HepG2 (cell line): ENCODE measurements at regions of chr17 and their contacts with region 1.

Region 1: DNA sequence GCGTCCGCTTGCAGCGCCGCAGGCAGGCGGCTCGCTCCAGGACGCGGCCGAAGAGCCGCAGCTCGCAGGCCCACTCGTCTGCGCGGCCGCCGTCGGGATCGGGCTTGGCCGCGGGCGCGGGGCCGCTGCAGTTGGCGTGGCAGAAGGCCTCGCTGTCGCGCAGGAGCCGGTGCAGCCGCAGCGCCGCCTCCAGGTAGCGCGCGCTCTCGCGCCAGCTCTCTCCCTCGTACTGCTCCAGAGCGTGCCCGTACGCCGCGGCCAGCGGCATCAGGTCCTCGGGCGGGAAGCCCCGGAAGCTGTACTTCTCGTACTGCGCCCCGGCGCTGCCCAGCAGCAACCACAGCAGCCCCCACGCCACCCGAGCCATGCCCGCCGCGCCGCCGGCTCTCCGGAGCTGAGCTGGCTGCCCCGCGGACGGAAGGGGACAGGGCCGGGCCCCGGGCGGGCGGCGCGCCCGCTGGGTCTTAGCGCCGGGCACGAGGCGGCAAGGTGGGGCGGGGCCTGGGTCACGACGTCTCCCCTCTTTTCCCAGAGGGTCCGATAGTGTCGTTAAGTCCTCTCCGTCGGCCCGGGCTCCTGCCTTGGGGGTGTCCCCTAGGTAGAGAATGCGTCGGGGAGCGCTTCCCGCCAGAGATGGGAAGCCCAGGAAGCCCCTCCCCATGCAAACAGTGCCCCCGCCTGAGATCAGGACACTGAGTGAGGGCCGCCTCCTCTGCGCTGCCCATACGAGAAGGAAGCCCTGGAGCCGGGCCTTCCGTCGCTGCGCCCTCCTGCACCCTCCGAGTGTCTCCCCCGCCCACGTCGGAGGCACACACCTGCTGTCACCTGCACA is at the start of gene P3H4:
- DNase-seq: peak; percentile 60
- ATAC-seq: peak; percentile 80
- H3K4me3 ChIP-seq: peak within 1 kb of the TSS; percentile 83 to 88 (median 87)
- H3K27ac ChIP-seq: peak within 1 kb of the TSS; percentile 82
- H3K4me1 ChIP-seq: peaks cover 60% of the 10 kb centered on the region
- H3K27me3 ChIP-seq: no peaks in the 10 kb centered on the region; a peak in 1 of 5 replicates
- CTCF ChIP-seq: peak; percentile 87
- EP300 ChIP-seq: peak; percentile 15 to 41; a peak in 1 of 4 replicates
- POLR2A ChIP-seq: peak; percentile 43 to 48; a peak in 2 of 4 replicates
- RAD21 ChIP-seq: peak; percentile 93
- total RNA-seq, gene P3H4: 13.5 and 37.1 TPM in 2 replicates

Region 2: GRCh38 chr17:41724476-41725050 is 87.2 kb before region 1 on chr17:
- CTCF ChIA-PET with region 1: no interaction called
- POLR2A ChIA-PET with region 1: no interaction called
- in situ Hi-C with region 1: no loop called
- intact Hi-C with region 1: no loop called
- DNase-seq: no peak
- ATAC-seq: no peak
- H3K4me3 ChIP-seq: no peak overlapping the region
- H3K27ac ChIP-seq: no peak overlapping the region
- H3K4me1 ChIP-seq: no peaks in the 10 kb centered on the region
- H3K27me3 ChIP-seq: peaks cover 10 to 61% of the 10 kb centered on the region in 2 experiments; a peak in 4 of 5 replicates
- CTCF ChIP-seq: no peak
- EP300 ChIP-seq: no peak
- POLR2A ChIP-seq: no peak
- RAD21 ChIP-seq: no peak

Region 3: GRCh38 chr17:41738077-41738735 is 73.6 kb before region 1 on chr17:
- CTCF ChIA-PET with region 1: interaction called, 14 read pairs
- POLR2A ChIA-PET with region 1: interaction called, 4 read pairs
- in situ Hi-C with region 1: no loop called
- intact Hi-C with region 1: no loop called
- DNase-seq: peak; percentile 78
- ATAC-seq: peak; percentile 79
- H3K4me3 ChIP-seq: peak overlapping the region in 1 of 3 experiments; percentile 23; a peak in 2 of 6 replicates
- H3K27ac ChIP-seq: no peak overlapping the region
- H3K4me1 ChIP-seq: peaks cover 38% of the 10 kb centered on the region
- H3K27me3 ChIP-seq: peaks cover 18 to 59% of the 10 kb centered on the region in 2 experiments
- CTCF ChIP-seq: peak; percentile 99
- EP300 ChIP-seq: no peak
- POLR2A ChIP-seq: no peak
- RAD21 ChIP-seq: peak; percentile 100

Region 4: GRCh38 chr17:41786227-41787020 is 25.3 kb before region 1 on chr17 and contains the start of gene JUP:
- CTCF ChIA-PET with region 1: interaction called, 3 read pairs
- POLR2A ChIA-PET with region 1: interaction called, 11 read pairs
- in situ Hi-C with region 1: no loop called
- intact Hi-C with region 1: no loop called
- DNase-seq: peak; percentile 99
- ATAC-seq: peak; percentile 97
- H3K4me3 ChIP-seq: peak within 1 kb of the TSS; percentile 60 to 90 (median 71)
- H3K27ac ChIP-seq: peak within 1 kb of the TSS; percentile 62
- H3K4me1 ChIP-seq: peaks cover 34% of the 10 kb centered on the region
- H3K27me3 ChIP-seq: no peaks in the 10 kb centered on the region; a peak in 1 of 5 replicates
- CTCF ChIP-seq: peak; percentile 83
- EP300 ChIP-seq: no peak
- POLR2A ChIP-seq: peak; percentile 89 to 97
- RAD21 ChIP-seq: peak; percentile 93
- total RNA-seq, gene JUP: 20.6 and 20.9 TPM in 2 replicates

Region 5: GRCh38 chr17:41801374-41802271 is 10.1 kb before region 1 on chr17:
- CTCF ChIA-PET with region 1: no interaction called
- POLR2A ChIA-PET with region 1: interaction called, 18 read pairs
- in situ Hi-C with region 1: no loop called
- intact Hi-C with region 1: no loop called
- DNase-seq: peak; percentile 68
- ATAC-seq: peak; percentile 73
- H3K4me3 ChIP-seq: peak overlapping the region in 2 of 3 experiments; percentile 5 to 63; a peak in 3 of 6 replicates
- H3K27ac ChIP-seq: no peak overlapping the region
- H3K4me1 ChIP-seq: peaks cover 30% of the 10 kb centered on the region
- H3K27me3 ChIP-seq: no peaks in the 10 kb centered on the region
- CTCF ChIP-seq: peak; percentile 98
- EP300 ChIP-seq: no peak
- POLR2A ChIP-seq: no peak; a peak in 1 of 4 replicates
- RAD21 ChIP-seq: peak; percentile 96

Region 6: DNA sequence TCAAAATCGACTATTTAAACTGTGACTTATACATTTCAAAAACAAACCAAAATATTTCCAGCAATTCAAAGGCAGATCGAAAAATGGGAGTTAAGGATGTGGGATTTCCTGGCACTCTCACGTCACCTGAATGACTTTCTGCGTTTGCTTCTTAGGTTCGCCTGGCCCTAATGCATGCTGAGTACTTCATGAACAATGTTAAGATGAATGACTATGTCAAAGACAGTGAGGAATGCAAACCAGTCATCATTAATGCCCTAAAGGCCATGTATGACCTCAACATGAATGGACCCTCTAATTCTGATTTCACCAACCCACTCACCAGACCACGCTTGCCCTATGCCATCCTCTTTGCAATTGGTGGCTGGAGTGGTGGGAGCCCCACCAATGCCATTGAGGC is 33.2 kb after region 1 on chr17:
- CTCF ChIA-PET with region 1: no interaction called
- POLR2A ChIA-PET with region 1: no interaction called
- in situ Hi-C with region 1: no loop called
- intact Hi-C with region 1: no loop called
- DNase-seq: no peak
- ATAC-seq: no peak
- H3K4me3 ChIP-seq: no peak overlapping the region
- H3K27ac ChIP-seq: no peak overlapping the region
- H3K4me1 ChIP-seq: peaks cover 6% of the 10 kb centered on the region; the same call in 1 of the 2 replicates
- H3K27me3 ChIP-seq: no peaks in the 10 kb centered on the region
- CTCF ChIP-seq: no peak
- EP300 ChIP-seq: no peak
- POLR2A ChIP-seq: no peak
- RAD21 ChIP-seq: no peak

Region 7: DNA sequence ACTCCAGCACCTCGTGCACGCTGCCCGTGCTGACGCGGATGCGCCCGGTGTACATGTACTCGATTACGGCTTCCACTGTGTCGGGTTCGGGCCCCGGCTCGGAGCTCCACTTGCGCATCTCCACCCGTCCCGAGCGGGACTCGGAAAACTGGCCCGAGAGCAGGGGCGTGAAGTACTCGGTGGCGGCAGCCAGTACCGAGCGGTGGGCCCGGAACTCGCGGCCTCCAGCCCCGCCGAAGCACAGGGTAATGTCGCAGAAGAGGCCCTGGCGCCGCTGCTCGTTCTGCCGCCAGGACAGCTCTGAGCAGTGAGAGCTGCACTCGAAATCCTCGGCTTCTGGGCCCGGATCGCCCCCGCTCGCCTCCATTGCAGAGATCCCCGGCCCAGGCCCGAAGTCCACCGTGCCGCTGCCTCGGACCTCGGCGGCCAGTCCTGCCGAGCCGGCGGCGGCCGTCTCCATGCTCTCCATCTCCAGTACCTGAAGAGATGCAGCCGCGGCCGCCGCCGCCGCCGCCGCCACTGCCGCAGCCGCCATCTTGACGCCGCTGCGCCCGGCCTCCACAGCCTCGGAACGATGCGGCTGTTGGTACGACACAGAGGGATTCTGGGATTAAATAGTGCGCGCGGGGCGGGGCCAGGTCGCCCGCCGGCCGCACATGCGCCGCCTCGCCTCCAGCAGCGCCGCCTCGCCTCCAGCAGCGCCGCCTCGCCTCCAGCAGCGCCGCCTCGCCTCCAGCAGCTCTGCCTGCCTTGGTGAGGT is 53.3 kb after region 1 on chr17 and contains the start of gene KLHL11:
- CTCF ChIA-PET with region 1: no interaction called
- POLR2A ChIA-PET with region 1: interaction called, 9 read pairs
- in situ Hi-C with region 1: no loop called
- intact Hi-C with region 1: loop called (anchors 10 kb)
- DNase-seq: peak; percentile 85
- ATAC-seq: peak; percentile 93
- H3K4me3 ChIP-seq: peak within 1 kb of the TSS; percentile 83 to 98 (median 91)
- H3K27ac ChIP-seq: peak within 1 kb of the TSS; percentile 79
- H3K4me1 ChIP-seq: peaks cover 56% of the 10 kb centered on the region
- H3K27me3 ChIP-seq: no peaks in the 10 kb centered on the region; a peak in 1 of 5 replicates
- CTCF ChIP-seq: no peak; the same call in 1 of the 2 replicates
- EP300 ChIP-seq: peak in 1 of 2 experiments; percentile 26; a peak in 1 of 4 replicates
- POLR2A ChIP-seq: peak; percentile 82 to 93
- RAD21 ChIP-seq: peak; percentile 50; the same call in 1 of the 2 replicates
- total RNA-seq, gene KLHL11: 27.5 and 37.1 TPM in 2 replicates